Tibial artery (tissue), 4 donors: ENCODE measurements at regions of chr7 and their contacts with region 1.

Region 1: DNA sequence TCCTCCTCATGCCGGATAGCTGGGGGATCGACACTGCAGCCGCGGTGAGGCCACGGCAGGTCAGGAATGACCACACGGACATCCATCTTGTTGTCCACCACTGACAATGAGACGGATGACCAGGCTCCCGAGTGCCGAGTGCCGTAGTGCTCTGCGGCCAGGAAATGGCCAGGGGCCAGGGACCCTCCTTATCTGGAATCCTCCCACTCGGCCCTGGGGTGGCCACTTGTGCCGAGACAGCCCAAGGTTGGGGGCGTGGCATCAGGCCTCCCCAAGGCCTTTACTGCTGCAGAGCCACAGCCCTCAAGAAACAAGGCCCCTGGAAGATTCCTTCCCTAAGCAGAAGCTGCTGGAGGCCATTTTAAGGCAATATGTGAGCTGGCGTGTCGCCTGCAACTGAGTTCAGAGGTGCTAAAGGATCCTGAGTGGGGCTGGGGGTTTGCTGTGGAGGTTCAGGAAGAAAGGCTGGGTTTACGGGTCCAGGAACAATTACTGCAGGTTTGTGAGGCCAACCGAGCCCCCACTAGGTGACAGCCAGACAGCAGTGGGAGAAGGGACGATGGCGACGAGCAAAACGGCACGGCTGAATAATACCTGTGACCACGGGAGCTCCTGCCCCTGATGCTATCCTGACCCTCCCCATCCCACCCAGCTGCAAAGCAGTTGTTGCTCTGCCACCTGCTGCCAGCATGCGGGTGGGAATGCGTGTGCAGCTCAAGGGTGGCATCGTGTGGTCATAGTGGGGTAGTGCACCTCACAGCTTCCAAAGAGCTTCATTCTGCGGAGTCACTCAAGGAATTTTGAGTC is 31.6 kb upstream of the LEP start:
- DNase-seq: peak in 1 of 2 donors; percentile 51
- H3K4me3 ChIP-seq: no peak overlapping the region
- H3K27ac ChIP-seq: no peak overlapping the region
- H3K4me1 ChIP-seq: no peaks in the 10 kb centered on the region
- H3K27me3 ChIP-seq: peaks cover 0 to 54% of the 10 kb centered on the region in 2 donors
- CTCF ChIP-seq: peak; percentile 97 to 98

Region 2: DNA sequence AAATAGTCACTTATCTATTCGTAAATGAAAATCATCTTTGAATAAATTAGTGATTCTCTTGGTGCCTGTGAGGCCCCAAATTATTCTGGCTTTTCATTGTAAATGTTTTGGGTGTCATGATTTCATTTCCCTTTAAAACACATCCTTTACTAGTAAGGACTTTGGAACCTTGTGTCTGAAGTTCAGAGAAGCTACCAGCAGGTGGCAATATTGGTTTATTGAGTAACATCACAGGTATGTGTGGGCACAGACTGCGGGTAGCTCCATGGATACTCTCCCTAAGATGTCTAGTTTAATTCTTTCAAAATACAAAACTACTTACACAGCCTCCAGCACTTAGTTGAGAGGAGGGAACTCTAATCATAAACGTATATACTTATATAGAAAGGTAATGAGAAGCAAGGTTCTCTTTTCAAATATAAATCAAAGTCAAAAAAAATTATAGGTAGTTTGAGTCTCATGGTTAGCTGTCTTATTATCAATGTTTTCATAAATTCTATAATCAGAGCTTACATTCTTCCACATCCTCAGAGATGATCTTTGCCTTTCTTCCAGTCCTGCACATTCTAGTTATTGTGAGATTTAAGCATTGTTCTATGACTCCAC is 1406.3 kb before region 1 on chr7:
- intact Hi-C with region 1: loop called (anchors 10 kb)
- DNase-seq: no peak
- H3K4me3 ChIP-seq: no peak overlapping the region
- H3K27ac ChIP-seq: no peak overlapping the region
- H3K4me1 ChIP-seq: no peaks in the 10 kb centered on the region
- H3K27me3 ChIP-seq: no peaks in the 10 kb centered on the region
- CTCF ChIP-seq: peak; percentile 30 to 31

Region 3: DNA sequence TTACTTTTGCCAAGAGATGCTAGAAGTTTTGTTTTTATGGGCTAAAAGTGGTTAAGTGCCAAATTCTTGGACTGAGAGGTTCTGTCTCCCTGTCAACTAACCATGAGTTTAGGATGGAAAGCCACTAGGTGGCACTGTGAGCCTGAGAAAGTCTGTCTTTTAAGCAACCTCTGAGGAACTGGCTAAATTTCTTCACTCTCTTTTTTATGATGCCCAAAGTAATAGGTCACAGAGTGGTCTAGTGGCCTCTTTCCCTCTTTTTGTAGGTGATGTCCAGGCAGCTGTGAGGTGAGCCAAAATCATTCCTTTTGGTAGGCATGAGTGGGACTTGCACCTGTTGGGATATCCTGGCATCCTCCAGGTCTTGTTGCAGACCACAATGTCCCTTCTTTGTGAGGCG is 500.6 kb before region 1 on chr7:
- intact Hi-C with region 1: loop called (anchors 5 kb)
- DNase-seq: peak; percentile 77 to 85
- H3K4me3 ChIP-seq: no peak overlapping the region
- H3K27ac ChIP-seq: no peak overlapping the region
- H3K4me1 ChIP-seq: no peaks in the 10 kb centered on the region
- H3K27me3 ChIP-seq: no peaks in the 10 kb centered on the region
- CTCF ChIP-seq: peak; percentile 68 to 76